PC-9 (cell line): ENCODE measurements at regions of chr6 and their contacts with region 1.

Region 1: GRCh38 chr6:42315991-42316378 is 98.3 kb upstream of the MRPS10 start:
- DNase-seq: peak; percentile 79 to 95
- H3K4me3 ChIP-seq: no peak overlapping the region
- H3K27ac ChIP-seq: peak overlapping the region; percentile 93
- H3K4me1 ChIP-seq: peaks cover 58% of the 10 kb centered on the region
- H3K27me3 ChIP-seq: no peaks in the 10 kb centered on the region
- CTCF ChIP-seq: no peak

Region 2: DNA sequence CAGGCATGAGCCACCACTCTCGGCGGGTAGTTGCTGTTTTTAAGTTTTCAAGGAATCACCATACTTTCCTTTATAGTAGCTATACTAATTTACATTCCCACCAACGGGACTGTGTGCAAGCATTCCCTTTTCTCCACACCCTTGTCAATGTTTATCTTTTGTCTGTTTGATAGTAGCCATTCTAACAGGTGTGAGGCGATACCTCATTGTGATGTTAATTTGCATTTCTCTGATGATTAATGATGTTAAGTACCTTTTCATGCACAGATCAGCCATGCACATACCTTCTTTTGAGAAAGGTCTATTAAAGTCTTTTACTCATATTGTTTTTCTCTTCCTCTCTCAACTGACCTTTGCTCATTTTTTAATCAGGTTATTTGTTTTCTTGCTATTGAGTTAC is 331.4 kb before region 1 on chr6:
- CTCF ChIA-PET with region 1: no interaction called
- POLR2A ChIA-PET with region 1: interaction called, 16 read pairs
- intact Hi-C with region 1: no loop called
- DNase-seq: no peak
- H3K4me3 ChIP-seq: no peak overlapping the region
- H3K27ac ChIP-seq: no peak overlapping the region
- H3K4me1 ChIP-seq: no peaks in the 10 kb centered on the region
- H3K27me3 ChIP-seq: no peaks in the 10 kb centered on the region
- CTCF ChIP-seq: no peak

Region 3: GRCh38 chr6:42279144-42279781 is 36.7 kb before region 1 on chr6:
- CTCF ChIA-PET with region 1: no interaction called
- POLR2A ChIA-PET with region 1: no interaction called
- intact Hi-C with region 1: loop called (anchors 1 kb)
- DNase-seq: peak in 1 of 2 experiments; percentile 67
- H3K4me3 ChIP-seq: no peak overlapping the region
- H3K27ac ChIP-seq: no peak overlapping the region
- H3K4me1 ChIP-seq: peaks cover 13% of the 10 kb centered on the region
- H3K27me3 ChIP-seq: no peaks in the 10 kb centered on the region
- CTCF ChIP-seq: no peak

Region 4: DNA sequence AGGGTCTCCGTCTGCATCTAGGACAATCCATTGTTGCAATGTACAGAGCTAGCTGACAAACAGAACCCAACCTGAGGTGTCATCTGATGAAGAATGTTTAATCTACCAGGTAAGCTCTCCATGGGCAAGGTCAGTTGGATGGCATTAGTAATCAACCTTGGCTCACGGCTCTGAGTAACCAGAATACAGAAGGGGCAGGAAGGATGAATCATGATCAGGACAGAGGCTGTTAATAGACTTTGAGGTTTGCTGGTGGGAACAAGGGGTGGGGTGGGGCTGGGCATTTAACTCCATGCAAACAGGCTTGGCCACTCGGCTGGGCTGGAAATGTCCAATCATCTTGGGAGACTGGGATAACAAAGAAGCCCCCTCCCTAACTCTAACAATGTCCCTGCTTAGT is 21.2 kb before region 1 on chr6:
- CTCF ChIA-PET with region 1: no interaction called
- POLR2A ChIA-PET with region 1: interaction called, 4 read pairs
- intact Hi-C with region 1: loop called (anchors 1 kb)
- DNase-seq: peak; percentile 67 to 97
- H3K4me3 ChIP-seq: no peak overlapping the region
- H3K27ac ChIP-seq: peak overlapping the region; percentile 91
- H3K4me1 ChIP-seq: peaks cover 69% of the 10 kb centered on the region
- H3K27me3 ChIP-seq: no peaks in the 10 kb centered on the region
- CTCF ChIP-seq: no peak

Region 5: GRCh38 chr6:42338663-42339218 is 22.8 kb after region 1 on chr6:
- CTCF ChIA-PET with region 1: no interaction called
- POLR2A ChIA-PET with region 1: interaction called, 3 read pairs
- intact Hi-C with region 1: loop called (anchors 1 kb)
- DNase-seq: peak; percentile 70 to 97
- H3K4me3 ChIP-seq: peak overlapping the region; percentile 15; the same call in 1 of the 2 replicates
- H3K27ac ChIP-seq: peak overlapping the region; percentile 93
- H3K4me1 ChIP-seq: peaks cover 39% of the 10 kb centered on the region
- H3K27me3 ChIP-seq: no peaks in the 10 kb centered on the region
- CTCF ChIP-seq: no peak

Region 6: GRCh38 chr6:42390228-42390934 is 74.4 kb after region 1 on chr6:
- CTCF ChIA-PET with region 1: no interaction called
- POLR2A ChIA-PET with region 1: no interaction called
- intact Hi-C with region 1: no loop called
- DNase-seq: no peak
- H3K4me3 ChIP-seq: no peak overlapping the region
- H3K27ac ChIP-seq: no peak overlapping the region
- H3K4me1 ChIP-seq: no peaks in the 10 kb centered on the region
- H3K27me3 ChIP-seq: no peaks in the 10 kb centered on the region
- CTCF ChIP-seq: no peak